WTC11 (cell line): ENCODE measurements at regions of chr20 and their contacts with region 1.

Region 1: GRCh38 chr20:17666481-17666880 is 15.6 kb downstream of the RRBP1 start:
- DNase-seq: no peak
- ATAC-seq: no peak
- H3K4me3 Mint-ChIP-seq: no peak overlapping the region
- H3K27ac Mint-ChIP-seq: no peak overlapping the region
- H3K4me1 Mint-ChIP-seq: peaks cover 82% of the 10 kb centered on the region
- H3K27me3 Mint-ChIP-seq: no peaks in the 10 kb centered on the region
- CTCF ChIP-seq: no peak

Region 2: DNA sequence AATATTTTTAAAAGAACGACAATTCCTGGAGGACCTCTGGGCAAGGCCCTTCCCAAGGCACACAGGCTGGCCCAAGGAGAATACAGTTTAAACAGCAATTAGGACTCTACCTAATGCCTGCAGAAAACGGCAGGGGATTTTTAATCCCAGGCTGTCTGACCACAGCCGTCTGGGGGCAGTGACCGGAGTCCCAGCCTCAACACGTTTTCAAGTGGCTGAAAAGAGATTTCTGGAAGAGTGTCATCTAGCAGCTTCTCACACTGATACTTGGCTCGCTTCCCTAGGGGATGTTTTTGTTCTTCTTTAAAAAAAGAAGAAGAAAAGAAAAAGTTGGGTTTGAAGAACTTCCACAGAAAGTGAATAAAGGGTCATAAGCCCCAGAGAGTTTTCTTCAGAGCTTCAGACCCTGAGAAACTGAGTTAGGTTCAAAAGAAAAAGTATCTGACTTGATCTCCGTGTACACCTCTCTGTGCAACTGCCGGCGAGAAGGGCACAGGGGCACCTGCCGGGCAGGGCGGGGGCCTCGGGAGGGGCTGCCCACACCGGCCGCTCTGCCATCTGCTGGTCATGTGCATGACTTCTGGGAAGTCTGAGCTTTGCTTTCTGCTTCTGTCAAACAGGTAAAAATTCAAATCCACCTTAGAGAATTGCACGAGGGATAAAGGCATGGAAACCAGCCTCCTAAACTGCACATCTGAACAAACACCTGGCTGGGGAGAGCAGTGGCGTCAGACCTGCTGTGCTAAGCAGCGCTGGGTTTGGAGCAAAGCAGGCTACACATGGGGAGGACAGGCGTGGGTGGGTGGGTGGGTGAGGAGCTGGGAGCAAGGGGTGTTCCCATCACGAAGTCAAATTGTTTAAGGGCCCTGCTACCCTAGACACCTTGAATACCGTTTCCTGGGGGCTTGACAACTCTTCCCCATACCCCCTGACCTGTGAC is 17.4 kb before region 1 on chr20:
- CTCF ChIA-PET with region 1: interaction called, 10 read pairs
- POLR2A ChIA-PET with region 1: no interaction called
- DNase-seq: peak; percentile 41
- ATAC-seq: peak; percentile 60
- H3K4me3 Mint-ChIP-seq: no peak overlapping the region
- H3K27ac Mint-ChIP-seq: no peak overlapping the region
- H3K4me1 Mint-ChIP-seq: peaks cover 55% of the 10 kb centered on the region
- H3K27me3 Mint-ChIP-seq: no peaks in the 10 kb centered on the region
- CTCF ChIP-seq: peak; percentile 17; the same call in 1 of the 2 replicates

Region 3: GRCh38 chr20:17654649-17655285 is 11.7 kb before region 1 on chr20:
- CTCF ChIA-PET with region 1: interaction called, 14 read pairs
- POLR2A ChIA-PET with region 1: no interaction called
- DNase-seq: peak; percentile 80
- ATAC-seq: peak; percentile 47
- H3K4me3 Mint-ChIP-seq: no peak overlapping the region
- H3K27ac Mint-ChIP-seq: peak overlapping the region; percentile 82
- H3K4me1 Mint-ChIP-seq: peaks cover 61% of the 10 kb centered on the region
- H3K27me3 Mint-ChIP-seq: no peaks in the 10 kb centered on the region
- CTCF ChIP-seq: peak; percentile 77

Region 4: DNA sequence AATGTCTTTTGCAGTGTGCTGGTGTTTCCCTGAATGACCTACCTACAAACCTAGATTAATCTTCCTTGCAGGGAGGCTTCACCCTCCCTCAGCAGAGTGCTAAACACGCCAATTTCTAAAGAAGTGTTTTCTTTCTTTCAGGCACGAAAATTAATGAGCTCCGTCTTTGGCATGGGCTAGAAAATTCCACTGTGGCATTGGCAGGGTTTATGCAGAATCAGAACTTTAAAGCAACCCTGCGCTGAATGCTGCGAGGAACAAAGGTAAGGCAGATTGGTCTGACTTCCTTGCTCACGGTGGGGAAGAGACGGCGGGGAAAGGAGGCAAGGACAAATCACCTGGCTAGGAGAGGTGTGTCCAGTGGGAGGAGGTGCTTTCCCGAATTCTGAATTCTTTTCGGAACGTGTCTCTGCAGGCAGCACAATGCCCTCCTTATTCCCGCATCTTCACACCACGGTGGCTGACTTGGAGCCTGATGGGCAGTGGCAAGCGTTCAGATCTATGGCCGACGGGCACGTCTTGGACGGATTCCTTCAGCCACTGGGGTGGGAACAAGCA is 27.0 kb after region 1 on chr20:
- CTCF ChIA-PET with region 1: no interaction called
- POLR2A ChIA-PET with region 1: no interaction called
- DNase-seq: no peak
- ATAC-seq: peak; percentile 68
- H3K4me3 Mint-ChIP-seq: no peak overlapping the region
- H3K27ac Mint-ChIP-seq: no peak overlapping the region; the same call in none of the 2 replicates
- H3K4me1 Mint-ChIP-seq: peaks cover 11% of the 10 kb centered on the region
- H3K27me3 Mint-ChIP-seq: peaks cover 3% of the 10 kb centered on the region; the same call in 1 of the 2 replicates
- CTCF ChIP-seq: no peak